Activated CD4-positive, alpha-beta T cell treated with anti-CD3 and anti-CD28 coated beads, Interleukin-2, amount 10 ng/mL, durations not matched to agents 24 days and 14 days (primary cell): ENCODE measurements at regions of chr16 and their contacts with region 1.

Region 1: DNA sequence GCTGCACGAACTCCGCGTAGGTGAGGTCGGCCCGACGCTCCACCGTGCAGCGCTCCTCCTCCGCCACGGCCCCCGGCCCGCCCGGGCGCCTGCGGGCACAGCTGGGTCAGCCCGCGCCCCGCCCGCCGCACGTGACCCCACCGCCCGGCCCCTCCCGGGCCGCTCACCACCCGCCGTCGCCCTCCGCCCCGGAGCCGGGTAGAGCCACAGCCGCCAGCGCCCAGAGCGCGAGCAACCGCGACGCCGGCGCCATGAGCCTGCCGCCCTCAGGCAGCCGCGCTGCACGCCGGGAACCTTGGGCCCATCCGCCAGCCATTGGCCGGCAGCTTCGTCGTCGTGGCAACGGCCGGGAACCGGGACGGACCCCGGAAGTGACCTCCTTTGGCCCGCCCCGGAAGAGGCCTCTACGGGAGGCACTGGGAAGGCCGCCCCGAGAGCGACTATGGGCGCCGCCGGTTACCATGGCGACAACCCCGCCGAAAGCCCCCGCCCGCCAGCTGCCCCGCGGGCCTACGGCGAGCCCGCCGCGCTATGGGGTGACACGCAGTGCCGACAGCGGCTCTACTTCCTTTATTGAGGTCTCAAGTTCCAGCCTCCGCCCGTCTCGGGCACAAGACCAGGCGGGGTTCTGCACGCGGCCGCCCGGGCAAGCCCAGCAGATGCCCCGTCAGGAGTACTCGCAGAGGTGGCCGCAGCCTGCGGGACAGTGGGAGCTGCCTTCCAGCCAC is at the start of gene JMJD8:
- DNase-seq: peak; percentile 99
- H3K4me3 Mint-ChIP-seq: peak within 1 kb of the TSS; percentile 87
- H3K27ac Mint-ChIP-seq: peak within 1 kb of the TSS; percentile 82
- H3K4me1 Mint-ChIP-seq: peaks cover 12% of the 10 kb centered on the region
- H3K27me3 Mint-ChIP-seq: no peaks in the 10 kb centered on the region
- total RNA-seq, gene JMJD8: 60.3 and 61.1 TPM in 2 replicates

Region 2: GRCh38 chr16:535446-536405 is 148.5 kb before region 1 on chr16:
- intact Hi-C with region 1: no loop called
- DNase-seq: no peak
- H3K4me3 Mint-ChIP-seq: no peak overlapping the region
- H3K27ac Mint-ChIP-seq: no peak overlapping the region
- H3K4me1 Mint-ChIP-seq: peaks cover 2% of the 10 kb centered on the region
- H3K27me3 Mint-ChIP-seq: no peaks in the 10 kb centered on the region

Region 3: DNA sequence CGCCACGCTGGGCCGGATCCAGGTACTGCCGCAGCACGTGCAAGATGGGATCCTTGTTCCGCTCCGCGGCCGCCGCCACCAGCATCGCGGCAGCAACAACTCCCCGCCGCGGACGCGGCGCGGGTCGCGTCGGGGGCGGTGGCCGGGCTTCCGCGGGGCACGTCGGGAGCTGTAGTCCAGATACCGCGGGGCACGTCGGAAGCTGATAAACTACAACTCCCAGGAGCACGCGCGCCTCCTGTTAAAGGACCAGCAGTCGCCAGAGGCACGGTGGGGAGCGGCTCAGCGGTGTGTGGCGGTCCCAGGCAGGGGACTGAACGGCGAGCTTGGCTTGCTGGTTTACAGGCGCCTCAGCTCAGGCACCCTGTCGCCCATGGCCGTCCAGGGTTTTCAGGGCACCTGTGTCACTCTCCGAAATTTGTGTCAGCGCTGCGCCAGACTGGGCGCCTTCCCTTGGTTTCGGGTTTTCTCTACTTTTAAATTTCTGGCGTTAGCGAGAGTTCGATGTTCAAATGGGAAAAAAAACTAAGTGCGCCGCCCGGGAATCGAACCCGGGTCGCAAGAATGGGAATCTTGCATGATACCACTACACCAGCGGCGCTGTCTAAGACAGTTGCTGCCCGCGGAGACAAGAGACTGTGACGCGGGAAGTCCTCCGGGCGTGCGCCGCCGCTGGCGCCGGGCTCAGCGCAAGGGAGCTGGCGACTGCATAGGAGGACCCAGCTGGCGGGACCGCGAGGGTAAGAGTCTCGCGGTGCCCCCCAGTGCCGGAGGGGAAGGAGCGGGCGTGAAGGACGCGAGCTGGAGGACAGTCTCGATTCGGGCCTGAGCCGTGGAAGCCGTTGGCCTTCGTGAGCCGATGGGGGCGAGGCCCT is 47.8 kb before region 1 on chr16 and contains the start of gene METTL26:
- intact Hi-C with region 1: loop called (anchors 2 kb)
- DNase-seq: peak; percentile 98
- H3K4me3 Mint-ChIP-seq: peak within 1 kb of the TSS; percentile 93
- H3K27ac Mint-ChIP-seq: peak within 1 kb of the TSS; percentile 95
- H3K4me1 Mint-ChIP-seq: peaks cover 6% of the 10 kb centered on the region
- H3K27me3 Mint-ChIP-seq: peaks cover 2% of the 10 kb centered on the region
- total RNA-seq, gene METTL26: 146 and 153 TPM in 2 replicates

Region 4: GRCh38 chr16:648781-649589 is 35.2 kb before region 1 on chr16 and contains the start of gene WDR90:
- intact Hi-C with region 1: loop called (anchors 2 kb)
- DNase-seq: peak; percentile 98
- H3K4me3 Mint-ChIP-seq: peak within 1 kb of the TSS; percentile 86
- H3K27ac Mint-ChIP-seq: peak within 1 kb of the TSS; percentile 85
- H3K4me1 Mint-ChIP-seq: peaks cover 7% of the 10 kb centered on the region
- H3K27me3 Mint-ChIP-seq: no peaks in the 10 kb centered on the region
- total RNA-seq, gene WDR90: 99.9 and 111 TPM in 2 replicates

Region 5: DNA sequence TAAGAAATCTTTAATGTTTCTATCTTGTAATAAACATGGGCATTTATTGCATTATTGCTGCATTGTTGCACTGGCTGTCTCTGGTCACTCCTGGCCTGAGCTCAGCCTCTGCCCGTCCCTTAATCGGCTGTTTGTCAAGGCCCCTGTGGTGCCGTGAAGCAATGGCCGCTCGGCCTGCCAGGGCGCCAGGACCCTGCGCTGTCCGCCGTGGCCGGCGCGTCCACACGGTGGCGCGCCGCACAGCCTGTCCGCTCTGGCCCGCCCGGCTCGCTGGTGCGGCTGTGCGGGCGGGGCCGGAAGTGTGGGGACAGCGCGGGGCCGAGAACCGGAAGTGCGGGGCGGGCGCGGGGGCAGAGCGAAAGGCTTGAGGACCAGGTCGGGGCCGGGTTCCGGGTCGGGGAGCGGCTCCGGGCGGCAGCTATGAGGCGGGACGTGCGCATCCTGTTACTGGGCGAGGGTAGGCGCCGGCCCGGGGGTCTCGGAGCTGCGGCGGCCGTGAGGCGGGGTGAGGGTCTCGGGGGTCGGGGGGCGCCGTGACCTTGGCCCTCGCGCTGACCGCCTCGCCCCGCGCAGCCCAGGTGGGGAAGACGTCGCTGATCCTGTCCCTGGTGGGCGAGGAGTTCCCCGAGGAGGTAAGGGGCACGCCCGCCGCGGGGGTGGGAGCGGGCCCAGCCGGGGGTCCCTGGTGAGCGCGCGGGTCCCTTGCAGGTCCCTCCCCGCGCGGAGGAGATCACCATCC is 16.3 kb before region 1 on chr16 and contains the start of gene RHOT2:
- intact Hi-C with region 1: loop called (anchors 1 kb)
- DNase-seq: peak; percentile 99
- H3K4me3 Mint-ChIP-seq: peak within 1 kb of the TSS; percentile 84
- H3K27ac Mint-ChIP-seq: peak within 1 kb of the TSS; percentile 92
- H3K4me1 Mint-ChIP-seq: peaks cover 4% of the 10 kb centered on the region
- H3K27me3 Mint-ChIP-seq: no peaks in the 10 kb centered on the region
- total RNA-seq, gene RHOT2: 172 and 183 TPM in 2 replicates

Region 6: DNA sequence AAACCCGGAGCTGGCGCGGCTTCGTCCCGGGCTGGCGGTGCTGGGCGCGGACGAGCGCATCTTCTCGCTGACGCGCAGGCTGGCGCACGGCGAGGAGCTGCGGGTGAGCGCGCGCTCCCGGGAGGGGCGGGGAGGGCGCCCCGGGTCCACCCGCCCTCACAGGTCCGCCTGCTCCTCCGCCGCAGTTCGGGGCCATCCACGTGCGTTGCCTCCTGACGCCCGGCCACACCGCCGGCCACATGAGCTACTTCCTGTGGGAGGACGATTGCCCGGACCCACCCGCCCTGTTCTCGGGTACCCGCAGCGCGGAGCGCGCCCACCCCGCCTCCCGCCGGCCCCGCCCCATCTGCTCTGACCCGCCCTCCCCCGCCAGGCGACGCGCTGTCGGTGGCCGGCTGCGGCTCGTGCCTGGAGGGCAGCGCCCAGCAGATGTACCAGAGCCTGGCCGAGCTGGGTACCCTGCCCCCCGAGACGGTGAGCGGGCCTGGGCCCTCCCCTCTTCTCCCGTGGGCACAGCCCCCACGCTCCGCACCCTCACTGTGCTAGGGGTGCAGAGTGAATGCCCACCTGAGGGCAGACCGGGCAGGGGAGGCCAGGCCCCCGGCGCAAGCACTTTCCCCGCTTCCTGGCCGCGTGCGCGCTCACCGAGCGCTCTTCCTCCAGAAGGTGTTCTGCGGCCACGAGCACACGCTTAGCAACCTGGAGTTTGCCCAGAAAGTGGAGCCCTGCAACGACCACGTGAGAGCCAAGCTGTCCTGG is 44.1 kb after region 1 on chr16:
- intact Hi-C with region 1: loop called (anchors 5 kb)
- DNase-seq: peak; percentile 89
- H3K4me3 Mint-ChIP-seq: peak overlapping the region; percentile 64
- H3K27ac Mint-ChIP-seq: no peak overlapping the region
- H3K4me1 Mint-ChIP-seq: no peaks in the 10 kb centered on the region
- H3K27me3 Mint-ChIP-seq: peaks cover 3% of the 10 kb centered on the region